Activated CD8-positive, alpha-beta T cell treated with anti-CD3 and anti-CD28 coated beads, Interleukin-2, amount 10 ng/mL, durations not matched to agents 7 days and 5 days (primary cell): ENCODE measurements at regions of chr1 and their contacts with region 1.

Region 1: GRCh38 chr1:160951443-160952128 is 3.0 kb downstream of the ITLN2 start:
- DNase-seq: peak; percentile 87
- ATAC-seq: peak; percentile 88
- H3K4me3 Mint-ChIP-seq: no peak overlapping the region
- H3K27ac Mint-ChIP-seq: no peak overlapping the region
- H3K4me1 Mint-ChIP-seq: peaks cover 22% of the 10 kb centered on the region
- H3K27me3 Mint-ChIP-seq: no peaks in the 10 kb centered on the region

Region 2: DNA sequence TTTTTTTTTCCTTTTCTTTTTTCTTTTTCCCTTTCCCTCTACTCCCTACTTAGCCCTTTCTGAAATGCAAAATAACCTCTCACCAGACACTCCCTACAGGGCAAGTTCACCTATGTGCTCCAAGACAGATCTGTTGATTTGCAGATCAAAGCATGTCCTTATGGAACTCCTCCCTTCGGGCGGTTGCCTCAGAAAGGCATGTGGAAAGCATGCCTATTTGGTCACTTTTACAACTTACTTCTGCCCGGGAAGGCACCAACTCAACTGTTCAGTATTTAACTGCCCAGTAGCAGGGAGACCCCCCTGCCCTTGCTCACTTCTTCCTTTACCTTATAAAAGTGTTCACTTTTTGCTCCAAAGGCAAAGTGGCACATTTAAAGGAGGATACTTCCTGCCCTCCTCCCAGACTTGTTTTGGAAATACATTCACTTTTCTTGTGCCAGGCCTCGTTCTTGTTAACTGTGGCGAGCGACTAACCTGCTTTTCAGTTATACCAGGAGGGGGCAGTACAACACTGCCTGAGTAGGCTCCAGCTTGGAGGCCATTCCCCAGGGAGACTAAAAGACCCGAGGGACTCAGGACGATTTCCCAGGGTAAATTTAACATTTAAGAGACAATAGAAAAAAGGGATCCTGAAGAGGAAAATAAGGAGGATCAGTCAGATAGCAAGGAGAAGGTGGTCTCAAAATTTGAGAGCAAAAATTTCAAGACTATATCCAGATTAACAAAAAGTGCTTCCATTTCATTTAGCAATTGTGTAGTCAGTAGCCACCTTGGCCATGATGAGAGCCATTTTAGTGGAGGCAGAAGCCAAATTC is 224.9 kb before region 1 on chr1:
- CTCF ChIA-PET with region 1: interaction called, 159 read pairs
- POLR2A ChIA-PET with region 1: interaction called, 3 read pairs
- DNase-seq: peak; percentile 82
- ATAC-seq: peak; percentile 80
- H3K4me3 Mint-ChIP-seq: no peak overlapping the region
- H3K27ac Mint-ChIP-seq: no peak overlapping the region
- H3K4me1 Mint-ChIP-seq: peaks cover 25% of the 10 kb centered on the region
- H3K27me3 Mint-ChIP-seq: no peaks in the 10 kb centered on the region

Region 3: GRCh38 chr1:160821628-160822027 is 130.0 kb before region 1 on chr1:
- CTCF ChIA-PET with region 1: interaction called, 10 read pairs
- POLR2A ChIA-PET with region 1: no interaction called
- DNase-seq: no peak
- ATAC-seq: no peak
- H3K4me3 Mint-ChIP-seq: no peak overlapping the region
- H3K27ac Mint-ChIP-seq: no peak overlapping the region
- H3K4me1 Mint-ChIP-seq: peaks cover 4% of the 10 kb centered on the region
- H3K27me3 Mint-ChIP-seq: no peaks in the 10 kb centered on the region

Region 4: GRCh38 chr1:160862203-160863060 is 89.2 kb before region 1 on chr1 and contains the start of gene CD244:
- CTCF ChIA-PET with region 1: interaction called, 18 read pairs
- POLR2A ChIA-PET with region 1: no interaction called
- DNase-seq: peak; percentile 82
- ATAC-seq: peak; percentile 90
- H3K4me3 Mint-ChIP-seq: peak within 1 kb of the TSS; percentile 78
- H3K27ac Mint-ChIP-seq: peak within 1 kb of the TSS; percentile 90
- H3K4me1 Mint-ChIP-seq: peaks cover 56% of the 10 kb centered on the region
- H3K27me3 Mint-ChIP-seq: no peaks in the 10 kb centered on the region
- total RNA-seq, gene CD244: 15.0 to 15.5 TPM

Region 5: GRCh38 chr1:160987359-160988062 is 35.9 kb after region 1 on chr1:
- CTCF ChIA-PET with region 1: interaction called, 26 read pairs
- POLR2A ChIA-PET with region 1: no interaction called
- DNase-seq: no peak
- ATAC-seq: no peak
- H3K4me3 Mint-ChIP-seq: no peak overlapping the region
- H3K27ac Mint-ChIP-seq: no peak overlapping the region
- H3K4me1 Mint-ChIP-seq: peaks cover 8% of the 10 kb centered on the region
- H3K27me3 Mint-ChIP-seq: peaks cover 1% of the 10 kb centered on the region

Region 6: GRCh38 chr1:161038523-161039153 is 87.1 kb after region 1 on chr1 and contains the start of gene TSTD1:
- CTCF ChIA-PET with region 1: no interaction called
- POLR2A ChIA-PET with region 1: no interaction called
- DNase-seq: peak; percentile 89
- ATAC-seq: peak; percentile 91
- H3K4me3 Mint-ChIP-seq: peak within 1 kb of the TSS; percentile 91
- H3K27ac Mint-ChIP-seq: peak within 1 kb of the TSS; percentile 94
- H3K4me1 Mint-ChIP-seq: peaks cover 63% of the 10 kb centered on the region
- H3K27me3 Mint-ChIP-seq: no peaks in the 10 kb centered on the region
- total RNA-seq, gene TSTD1: 63.2 to 63.3 TPM

Region 7: DNA sequence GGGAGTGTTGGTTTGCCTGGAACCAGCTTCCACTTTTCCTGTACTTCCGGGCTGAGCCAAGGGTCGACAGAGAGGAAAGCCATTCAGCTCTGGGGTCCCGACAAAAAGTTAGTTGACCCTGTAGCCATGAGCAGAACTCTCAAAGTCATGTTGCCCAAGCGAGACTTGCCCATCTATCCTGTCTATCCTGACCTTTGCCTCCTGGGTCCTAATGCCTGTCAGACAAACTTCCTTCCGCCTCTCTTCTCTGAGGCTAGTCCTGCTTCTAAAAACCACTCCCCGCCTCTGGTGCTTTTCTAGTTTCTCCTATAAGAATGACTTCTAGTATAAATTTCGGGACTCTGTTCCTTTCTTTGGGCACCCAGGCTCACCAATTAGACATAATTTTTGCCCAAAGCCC is 299.2 kb after region 1 on chr1:
- CTCF ChIA-PET with region 1: no interaction called
- POLR2A ChIA-PET with region 1: no interaction called
- DNase-seq: no peak
- ATAC-seq: no peak
- H3K4me3 Mint-ChIP-seq: no peak overlapping the region
- H3K27ac Mint-ChIP-seq: no peak overlapping the region
- H3K4me1 Mint-ChIP-seq: no peaks in the 10 kb centered on the region
- H3K27me3 Mint-ChIP-seq: peaks cover 4% of the 10 kb centered on the region